Activated naive CD4-positive, alpha-beta T cell treated with anti-CD3 and anti-CD28 coated beads, Interleukin-2, amount 10 ng/mL, durations not matched to agents 7 days and 5 days (primary cell): ENCODE measurements at regions of chr19 and their contacts with region 1.

Region 1: DNA sequence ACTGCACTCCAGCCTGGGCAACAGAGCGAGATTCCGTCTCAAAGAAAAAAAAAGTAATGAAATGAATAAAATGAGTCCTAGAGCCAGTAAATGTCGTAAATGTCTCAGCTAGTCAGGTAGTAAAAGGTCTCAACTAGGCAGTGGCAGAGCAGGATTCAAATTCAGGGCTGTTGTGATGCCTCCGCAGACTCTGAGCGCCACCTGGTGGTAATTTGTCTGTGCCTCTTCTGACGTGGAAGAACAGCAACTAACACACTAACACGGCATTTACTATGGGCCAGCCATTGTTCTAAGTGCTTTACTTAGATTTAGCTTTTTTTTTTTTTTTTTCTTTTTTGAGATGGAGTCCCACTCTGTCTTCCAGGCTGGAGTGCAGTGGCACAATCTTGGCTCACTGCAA is 30.2 kb downstream of the CYP2F1 start:
- DNase-seq: peak; percentile 93
- H3K4me3 Mint-ChIP-seq: no peak overlapping the region
- H3K27ac Mint-ChIP-seq: no peak overlapping the region
- H3K4me1 Mint-ChIP-seq: no peaks in the 10 kb centered on the region
- H3K27me3 Mint-ChIP-seq: peaks cover 44% of the 10 kb centered on the region

Region 2: DNA sequence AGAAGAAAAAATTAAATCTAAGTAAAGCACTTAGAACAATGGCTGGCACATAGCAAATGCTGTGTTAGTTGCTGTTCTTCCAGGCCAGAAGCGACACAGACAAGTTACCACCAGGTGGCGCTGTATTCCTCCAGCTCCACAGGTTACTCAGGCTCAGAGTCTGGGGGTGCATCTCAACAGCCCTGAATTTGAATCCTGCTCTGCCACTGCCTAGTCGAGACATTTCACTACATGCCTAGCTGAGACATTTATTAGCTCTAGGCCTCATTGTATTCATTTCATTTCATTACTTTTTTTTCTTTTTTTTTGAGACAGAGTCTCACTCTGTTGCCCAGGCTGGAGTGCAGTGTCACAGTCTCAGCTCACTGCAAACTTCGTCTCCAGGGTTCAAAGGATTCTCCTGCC is 169.8 kb before region 1 on chr19:
- CTCF ChIA-PET with region 1: interaction called, 25 read pairs
- DNase-seq: peak; percentile 87
- H3K4me3 Mint-ChIP-seq: no peak overlapping the region
- H3K27ac Mint-ChIP-seq: no peak overlapping the region
- H3K4me1 Mint-ChIP-seq: peaks cover 50% of the 10 kb centered on the region
- H3K27me3 Mint-ChIP-seq: peaks cover 43% of the 10 kb centered on the region

Region 3: GRCh38 chr19:41128692-41129091 is 15.7 kb before region 1 on chr19:
- CTCF ChIA-PET with region 1: interaction called, 17 read pairs
- DNase-seq: no peak
- H3K4me3 Mint-ChIP-seq: no peak overlapping the region
- H3K27ac Mint-ChIP-seq: no peak overlapping the region
- H3K4me1 Mint-ChIP-seq: peaks cover 27% of the 10 kb centered on the region
- H3K27me3 Mint-ChIP-seq: peaks cover 60% of the 10 kb centered on the region